ENCODE measurements at regions of chr16 and their contacts with region 1.

Region 1: GRCh38 chr16:15466886-15467781 is 32.7 kb downstream of the BMERB1 start:
- DNase-seq: no peak
- ATAC-seq: no peak
- H3K4me3 ChIP-seq: no peak overlapping the region
- H3K27ac ChIP-seq: no peak overlapping the region
- H3K4me1 ChIP-seq: no peaks in the 10 kb centered on the region
- H3K27me3 ChIP-seq: no peaks in the 10 kb centered on the region
- CTCF ChIP-seq: peak; percentile 35; the same call in 1 of the 2 replicates
- POLR2A ChIP-seq: no peak
- RAD21 ChIP-seq: peak; percentile 55

Region 2: DNA sequence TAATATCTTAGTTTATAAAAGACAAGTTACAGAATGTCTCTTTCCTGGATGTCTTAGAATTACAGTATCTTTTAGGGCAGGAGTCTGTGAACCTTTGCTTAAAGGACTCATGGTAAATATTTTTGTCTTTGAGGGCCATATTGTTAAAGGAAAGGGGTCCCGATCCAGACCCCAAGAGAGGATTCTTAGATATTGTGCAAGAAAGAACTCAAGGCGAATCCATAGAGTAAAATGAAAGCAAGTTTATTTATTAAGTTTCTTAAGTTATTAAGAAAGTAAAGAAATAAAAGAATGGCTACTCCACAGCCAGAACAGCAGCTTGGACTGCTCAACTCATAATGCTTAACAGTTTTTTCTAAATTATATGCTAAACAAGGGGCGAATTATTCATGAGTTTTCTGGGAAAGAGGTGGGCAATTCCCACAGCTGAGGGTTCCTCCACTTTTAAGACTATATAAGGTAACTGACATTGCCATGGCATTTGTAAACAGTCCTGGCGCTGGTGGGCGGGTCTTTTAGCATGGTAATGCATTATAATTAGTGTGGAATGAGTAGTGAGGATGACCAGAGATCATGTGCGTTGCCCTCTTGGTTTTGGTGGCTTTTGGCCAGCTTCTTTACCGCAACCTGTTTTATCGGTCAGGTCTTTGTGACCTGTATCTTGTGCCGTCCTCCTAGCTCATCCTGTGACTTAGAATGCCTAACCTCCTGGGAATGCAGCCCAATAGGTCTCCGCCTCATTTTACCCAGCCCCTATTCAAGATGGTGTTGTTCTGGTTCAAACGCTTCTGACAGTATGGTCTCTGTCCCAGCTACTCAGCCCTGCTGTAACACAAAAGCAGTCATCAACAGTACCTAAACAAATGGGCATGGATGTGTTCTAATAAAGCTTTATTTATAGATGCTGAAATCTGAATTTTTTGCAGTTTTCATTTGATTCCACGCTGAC is 20.5 kb after region 1 on chr16:
- CTCF ChIA-PET with region 1: no interaction called
- POLR2A ChIA-PET with region 1: no interaction called
- dilution Hi-C with region 1: no loop called
- in situ Hi-C with region 1: no loop called
- intact Hi-C with region 1: loop called (anchors 2 kb)
- DNase-seq: no peak
- ATAC-seq: no peak
- H3K4me3 ChIP-seq: no peak overlapping the region
- H3K27ac ChIP-seq: peak overlapping the region; percentile 35; the same call in 1 of the 2 replicates
- H3K4me1 ChIP-seq: peaks cover 25% of the 10 kb centered on the region
- H3K27me3 ChIP-seq: no peaks in the 10 kb centered on the region
- CTCF ChIP-seq: no peak
- POLR2A ChIP-seq: no peak
- RAD21 ChIP-seq: no peak

Region 3: DNA sequence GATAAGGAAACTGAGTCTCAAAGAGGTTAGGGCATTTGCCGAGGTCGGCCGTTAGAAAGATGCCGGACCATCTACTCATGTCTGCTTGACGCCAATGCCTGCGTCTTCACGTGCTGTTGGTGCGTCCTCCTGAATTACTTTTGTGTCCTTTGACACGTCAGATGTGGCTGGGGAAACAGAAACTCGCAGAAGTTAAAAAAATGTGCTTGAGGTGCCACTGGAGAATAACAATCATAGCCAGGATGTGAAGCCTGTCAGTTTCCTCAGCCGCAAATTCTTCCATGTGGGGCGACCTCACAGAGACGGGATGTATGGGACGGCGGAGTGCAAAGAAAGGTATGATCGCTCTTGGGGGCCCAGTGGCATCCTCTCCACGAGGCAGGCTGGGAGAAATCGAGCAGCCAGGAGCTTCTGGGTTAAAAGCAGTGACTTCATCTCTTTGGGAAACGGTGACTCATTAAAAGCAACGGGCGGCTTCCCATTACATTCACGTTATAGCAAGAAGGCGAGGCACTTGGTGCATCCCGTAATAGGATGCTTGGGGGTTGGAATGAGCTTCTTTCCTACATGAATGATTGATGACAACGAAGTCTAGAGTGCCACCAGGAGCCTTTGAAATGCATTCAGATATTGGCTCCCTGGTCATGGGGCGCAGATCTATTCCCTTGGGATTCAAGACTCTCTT is 35.0 kb after region 1 on chr16:
- CTCF ChIA-PET with region 1: no interaction called
- POLR2A ChIA-PET with region 1: no interaction called
- dilution Hi-C with region 1: no loop called
- in situ Hi-C with region 1: no loop called
- intact Hi-C with region 1: no loop called
- DNase-seq: peak; percentile 96
- ATAC-seq: peak; percentile 91
- H3K4me3 ChIP-seq: no peak overlapping the region
- H3K27ac ChIP-seq: peak overlapping the region; percentile 89
- H3K4me1 ChIP-seq: peaks cover 12% of the 10 kb centered on the region
- H3K27me3 ChIP-seq: no peaks in the 10 kb centered on the region
- CTCF ChIP-seq: no peak
- POLR2A ChIP-seq: no peak
- RAD21 ChIP-seq: 0 out of 2 replicates have a peak, but pooled peaks have one; percentile 11

Region 4: DNA sequence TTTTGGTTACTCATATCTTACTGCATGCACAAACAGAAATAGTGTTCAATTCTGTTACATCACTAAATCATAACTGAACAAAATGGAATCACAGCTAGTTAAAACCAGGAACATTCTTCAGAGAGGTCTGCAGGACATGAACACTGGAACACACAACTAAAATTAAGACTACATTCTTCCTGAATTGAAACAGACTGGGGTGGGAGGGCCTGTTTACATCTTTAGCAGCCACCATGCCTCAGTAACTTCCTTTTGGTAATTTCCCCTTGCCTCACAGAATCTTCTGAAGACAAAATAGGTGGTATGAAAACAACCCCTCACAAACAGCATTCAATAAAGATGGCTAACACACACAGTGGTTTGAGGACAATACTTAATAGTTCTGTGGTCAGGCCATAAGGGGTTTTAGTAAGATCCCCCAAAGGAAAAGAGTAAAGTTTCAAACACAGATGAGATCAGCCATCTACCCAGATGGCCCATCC is 169.3 kb after region 1 on chr16:
- CTCF ChIA-PET with region 1: no interaction called
- POLR2A ChIA-PET with region 1: no interaction called
- dilution Hi-C with region 1: no loop called
- in situ Hi-C with region 1: no loop called
- intact Hi-C with region 1: no loop called
- DNase-seq: no peak
- ATAC-seq: no peak
- H3K4me3 ChIP-seq: no peak overlapping the region
- H3K27ac ChIP-seq: no peak overlapping the region
- H3K4me1 ChIP-seq: no peaks in the 10 kb centered on the region
- H3K27me3 ChIP-seq: no peaks in the 10 kb centered on the region
- CTCF ChIP-seq: no peak
- POLR2A ChIP-seq: no peak
- RAD21 ChIP-seq: no peak

Measured in IMR-90 (cell line).